B cell (primary cell): ENCODE measurements at regions of chr16 and their contacts with region 1.

Region 1: DNA sequence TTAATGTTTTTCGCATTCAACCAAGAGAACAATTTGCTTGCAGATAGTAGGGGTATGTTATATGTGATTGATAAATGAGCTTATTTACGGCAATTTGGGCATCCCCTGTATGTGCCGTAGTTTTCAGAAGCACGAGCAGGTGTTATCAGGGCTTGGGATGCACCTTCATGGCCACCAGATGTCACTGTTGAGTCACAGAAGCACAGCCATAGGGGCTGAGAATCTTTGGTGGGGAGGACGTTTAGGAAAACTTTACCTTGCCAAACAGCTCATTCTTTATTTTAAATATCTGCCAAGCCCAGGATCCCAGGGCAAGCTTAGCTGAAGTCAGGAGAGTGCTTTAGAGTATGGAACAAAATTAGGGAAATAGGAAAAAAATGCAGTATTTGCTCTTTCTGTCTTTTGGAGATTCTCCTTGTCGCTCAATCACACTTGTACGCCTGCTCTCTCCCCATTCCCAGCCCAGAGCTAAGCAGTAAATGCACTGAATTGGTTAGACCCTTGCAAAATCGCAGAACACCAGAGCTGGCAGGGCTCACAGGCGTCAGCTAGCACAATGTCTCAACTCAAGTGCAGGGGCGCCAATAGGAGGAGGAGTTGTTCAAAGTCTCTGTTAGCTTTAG is 93.6 kb upstream of the MPHOSPH6 start:
- DNase-seq: peak; percentile 67
- ATAC-seq: peak; percentile 66
- H3K4me3 ChIP-seq: no peak overlapping the region
- H3K4me3 Mint-ChIP-seq: no peak overlapping the region
- H3K27ac ChIP-seq: no peak overlapping the region
- H3K27ac Mint-ChIP-seq: no peak overlapping the region
- H3K4me1 ChIP-seq: no peaks in the 10 kb centered on the region
- H3K4me1 Mint-ChIP-seq: no peaks in the 10 kb centered on the region
- H3K27me3 ChIP-seq: peaks cover 0 to 5% (median 2%) of the 10 kb centered on the region in 4 experiments
- H3K27me3 Mint-ChIP-seq: peaks cover 11% of the 10 kb centered on the region
- CTCF ChIP-seq: peak; percentile 96

Region 2: DNA sequence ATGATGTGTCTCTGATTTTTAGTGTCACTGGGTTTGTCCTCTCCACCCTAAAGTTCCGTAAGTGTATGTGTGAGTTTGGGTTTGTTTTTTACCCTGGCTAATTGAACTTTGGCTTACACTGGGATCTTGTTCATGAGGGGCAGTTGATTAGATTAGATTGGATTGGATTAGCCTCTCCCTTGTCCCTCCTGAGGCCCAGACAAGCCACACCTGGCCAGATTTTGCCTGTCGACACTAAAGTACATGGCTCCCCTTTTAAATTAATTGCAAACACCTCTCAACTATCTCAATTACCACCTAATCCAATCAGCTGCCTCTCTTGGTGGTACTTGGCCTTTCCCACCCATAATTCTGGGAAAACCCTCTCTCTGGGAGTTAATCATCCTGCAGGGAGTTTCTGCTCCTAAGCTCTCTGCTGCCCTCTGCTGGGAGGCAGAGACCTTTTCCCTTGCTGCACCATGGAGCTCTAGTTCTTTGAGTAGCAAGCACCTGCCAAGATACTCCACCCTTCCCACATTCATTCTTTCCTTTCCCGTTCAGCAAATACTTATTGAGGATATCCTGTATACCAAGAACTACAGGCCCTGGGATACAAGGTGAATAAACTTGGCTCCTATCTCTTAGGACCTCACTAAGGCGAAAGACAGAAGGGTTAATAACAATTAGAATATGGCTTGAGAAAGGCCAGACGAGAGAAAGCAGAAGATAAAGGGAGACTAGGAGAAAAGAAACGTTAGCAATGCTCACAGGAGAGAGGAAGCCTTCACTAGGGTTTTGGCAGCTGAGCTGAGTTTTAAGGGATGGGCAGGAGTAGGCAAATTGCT is 33.6 kb before region 1 on chr16:
- CTCF ChIA-PET with region 1: interaction called, 17 read pairs
- POLR2A ChIA-PET with region 1: no interaction called
- intact Hi-C with region 1: no loop called
- DNase-seq: peak; percentile 55
- ATAC-seq: no peak
- H3K4me3 ChIP-seq: no peak overlapping the region
- H3K4me3 Mint-ChIP-seq: no peak overlapping the region
- H3K27ac ChIP-seq: no peak overlapping the region
- H3K27ac Mint-ChIP-seq: no peak overlapping the region
- H3K4me1 ChIP-seq: no peaks in the 10 kb centered on the region
- H3K4me1 Mint-ChIP-seq: no peaks in the 10 kb centered on the region
- H3K27me3 ChIP-seq: no peaks in the 10 kb centered on the region
- H3K27me3 Mint-ChIP-seq: peaks cover 34% of the 10 kb centered on the region
- CTCF ChIP-seq: peak; percentile 91

Region 3: GRCh38 chr16:82796047-82796446 is 532.4 kb after region 1 on chr16:
- CTCF ChIA-PET with region 1: interaction called, 10 read pairs
- POLR2A ChIA-PET with region 1: no interaction called
- intact Hi-C with region 1: no loop called
- DNase-seq: peak; percentile 53
- ATAC-seq: no peak
- H3K4me3 ChIP-seq: no peak overlapping the region
- H3K4me3 Mint-ChIP-seq: no peak overlapping the region
- H3K27ac ChIP-seq: no peak overlapping the region
- H3K27ac Mint-ChIP-seq: no peak overlapping the region
- H3K4me1 ChIP-seq: no peaks in the 10 kb centered on the region
- H3K4me1 Mint-ChIP-seq: no peaks in the 10 kb centered on the region
- H3K27me3 ChIP-seq: no peaks in the 10 kb centered on the region
- H3K27me3 Mint-ChIP-seq: no peaks in the 10 kb centered on the region
- CTCF ChIP-seq: peak; percentile 27

Region 4: GRCh38 chr16:83215406-83216001 is 951.9 kb after region 1 on chr16:
- CTCF ChIA-PET with region 1: interaction called, 31 read pairs
- POLR2A ChIA-PET with region 1: no interaction called
- intact Hi-C with region 1: no loop called
- DNase-seq: peak; percentile 42
- ATAC-seq: no peak
- H3K4me3 ChIP-seq: no peak overlapping the region
- H3K4me3 Mint-ChIP-seq: no peak overlapping the region
- H3K27ac ChIP-seq: no peak overlapping the region
- H3K27ac Mint-ChIP-seq: no peak overlapping the region
- H3K4me1 ChIP-seq: no peaks in the 10 kb centered on the region
- H3K4me1 Mint-ChIP-seq: no peaks in the 10 kb centered on the region
- H3K27me3 ChIP-seq: peaks cover 0 to 2% (median 0%) of the 10 kb centered on the region in 4 experiments
- H3K27me3 Mint-ChIP-seq: no peaks in the 10 kb centered on the region
- CTCF ChIP-seq: peak; percentile 67

Region 5: DNA sequence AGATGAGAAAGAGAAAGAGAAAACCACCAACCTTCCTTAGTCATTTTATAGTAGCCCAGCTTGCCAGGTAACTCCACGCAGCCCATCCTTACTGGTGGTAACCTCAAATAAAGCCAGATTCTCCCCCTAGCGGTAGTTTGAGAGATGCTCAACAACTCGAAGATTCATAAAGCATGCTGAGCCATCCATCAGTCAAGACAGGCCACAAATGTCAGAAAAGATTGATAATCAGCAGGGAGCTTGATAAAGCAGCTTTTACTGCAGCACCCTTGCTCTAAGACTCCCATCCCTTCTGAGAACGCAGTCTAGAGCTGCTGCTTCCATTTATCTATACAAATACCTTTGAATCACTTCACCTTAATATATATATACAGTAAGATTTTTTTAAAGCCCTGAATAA is 1092.6 kb after region 1 on chr16:
- CTCF ChIA-PET with region 1: interaction called, 5 read pairs
- POLR2A ChIA-PET with region 1: no interaction called
- intact Hi-C with region 1: loop called (anchors 2 kb)
- DNase-seq: peak; percentile 29
- ATAC-seq: peak; percentile 28
- H3K4me3 ChIP-seq: no peak overlapping the region
- H3K4me3 Mint-ChIP-seq: no peak overlapping the region
- H3K27ac ChIP-seq: no peak overlapping the region
- H3K27ac Mint-ChIP-seq: no peak overlapping the region
- H3K4me1 ChIP-seq: no peaks in the 10 kb centered on the region
- H3K4me1 Mint-ChIP-seq: no peaks in the 10 kb centered on the region
- H3K27me3 ChIP-seq: no peaks in the 10 kb centered on the region
- H3K27me3 Mint-ChIP-seq: no peaks in the 10 kb centered on the region
- CTCF ChIP-seq: peak; percentile 51

Region 6: GRCh38 chr16:83447560-83447959 is 1183.9 kb after region 1 on chr16:
- CTCF ChIA-PET with region 1: interaction called, 21 read pairs
- POLR2A ChIA-PET with region 1: no interaction called
- intact Hi-C with region 1: no loop called
- DNase-seq: no peak
- ATAC-seq: no peak
- H3K4me3 ChIP-seq: no peak overlapping the region
- H3K4me3 Mint-ChIP-seq: no peak overlapping the region
- H3K27ac ChIP-seq: no peak overlapping the region
- H3K27ac Mint-ChIP-seq: no peak overlapping the region
- H3K4me1 ChIP-seq: no peaks in the 10 kb centered on the region
- H3K4me1 Mint-ChIP-seq: no peaks in the 10 kb centered on the region
- H3K27me3 ChIP-seq: no peaks in the 10 kb centered on the region
- H3K27me3 Mint-ChIP-seq: peaks cover 3% of the 10 kb centered on the region
- CTCF ChIP-seq: no peak